B cell (primary cell): ENCODE measurements at regions of chr11 and their contacts with region 1.

Region 1: GRCh38 chr11:64185816-64186498 is at the start of gene STIP1:
- DNase-seq: peak; percentile 100
- ATAC-seq: peak; percentile 85
- H3K4me3 ChIP-seq: peak within 1 kb of the TSS; percentile 16 to 95 (median 83)
- H3K4me3 Mint-ChIP-seq: no peak within 1 kb of the TSS
- H3K27ac ChIP-seq: peak within 1 kb of the TSS; percentile 59 to 86
- H3K27ac Mint-ChIP-seq: peak within 1 kb of the TSS; percentile 94
- H3K4me1 ChIP-seq: peaks cover 13 to 24% of the 10 kb centered on the region in 2 donors
- H3K4me1 Mint-ChIP-seq: peaks cover 40% of the 10 kb centered on the region
- H3K27me3 ChIP-seq: no peaks in the 10 kb centered on the region
- H3K27me3 Mint-ChIP-seq: no peaks in the 10 kb centered on the region
- CTCF ChIP-seq: peak; percentile 37
- total RNA-seq, gene STIP1: 78.7 and 87.8 TPM in 2 replicates

Region 2: DNA sequence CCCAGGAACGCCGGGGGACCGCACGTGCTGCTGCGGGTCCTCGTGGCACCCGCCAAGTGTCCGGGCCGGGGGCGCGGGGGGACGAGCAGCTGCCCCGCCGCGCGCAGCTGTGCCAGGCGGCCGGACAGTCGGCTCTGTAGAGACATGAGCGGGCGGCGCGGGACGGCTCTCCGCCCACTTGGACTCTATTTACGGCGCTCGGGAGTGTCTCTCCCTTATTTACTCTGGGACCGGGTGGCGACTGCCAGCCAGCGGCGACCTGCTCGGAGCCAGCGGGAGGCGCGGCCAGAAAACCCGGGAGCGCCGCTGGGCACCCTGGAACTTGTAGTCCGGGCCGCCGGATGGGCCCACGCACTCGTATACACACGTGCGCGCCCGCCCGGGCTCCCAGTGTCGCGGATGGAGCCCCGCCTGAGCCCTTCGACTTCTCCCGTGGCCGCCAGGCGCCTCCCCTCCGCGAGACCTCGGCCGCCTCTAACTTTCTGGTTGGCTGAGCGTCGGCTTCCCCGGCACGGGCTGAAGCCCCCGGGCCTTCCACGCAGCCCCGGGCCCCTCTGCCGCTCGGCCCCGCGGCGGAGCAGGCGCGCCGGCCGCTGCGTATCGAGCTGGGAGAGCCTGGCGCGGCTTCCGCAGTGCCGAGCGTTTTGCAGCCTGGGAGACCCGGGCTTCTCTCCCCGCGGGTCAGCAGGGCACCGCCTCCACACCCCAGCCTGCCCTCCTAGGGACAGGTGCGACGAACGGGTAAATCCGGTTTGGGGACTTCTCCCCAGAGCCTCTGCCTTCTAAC is 19.9 kb before region 1 on chr11 and contains the start of gene MACROD1:
- CTCF ChIA-PET with region 1: no interaction called
- POLR2A ChIA-PET with region 1: interaction called, 3 read pairs
- intact Hi-C with region 1: loop called (anchors 2 kb)
- DNase-seq: peak; percentile 78
- ATAC-seq: peak; percentile 92
- H3K4me3 ChIP-seq: peak within 1 kb of the TSS in 4 of 5 experiments; percentile 67 to 87 (median 74)
- H3K4me3 Mint-ChIP-seq: peak within 1 kb of the TSS; percentile 91
- H3K27ac ChIP-seq: peak within 1 kb of the TSS in 1 of 2 donors; percentile 41
- H3K27ac Mint-ChIP-seq: peak within 1 kb of the TSS; percentile 82
- H3K4me1 ChIP-seq: peaks cover 12 to 14% of the 10 kb centered on the region in 2 donors
- H3K4me1 Mint-ChIP-seq: peaks cover 10% of the 10 kb centered on the region
- H3K27me3 ChIP-seq: no peaks in the 10 kb centered on the region
- H3K27me3 Mint-ChIP-seq: no peaks in the 10 kb centered on the region
- CTCF ChIP-seq: no peak
- total RNA-seq, gene MACROD1: 6.8 and 8.6 TPM in 2 replicates

Region 3: GRCh38 chr11:64240394-64241174 is 54.6 kb after region 1 on chr11 and contains the start of gene FKBP2:
- CTCF ChIA-PET with region 1: no interaction called
- POLR2A ChIA-PET with region 1: interaction called, 4 read pairs
- intact Hi-C with region 1: loop called (anchors 2 kb)
- DNase-seq: peak; percentile 99
- ATAC-seq: peak; percentile 58
- H3K4me3 ChIP-seq: peak within 1 kb of the TSS in 4 of 5 experiments; percentile 76 to 91 (median 83)
- H3K4me3 Mint-ChIP-seq: peak within 1 kb of the TSS; percentile 91
- H3K27ac ChIP-seq: peak within 1 kb of the TSS; percentile 98
- H3K27ac Mint-ChIP-seq: peak within 1 kb of the TSS; percentile 97
- H3K4me1 ChIP-seq: peaks cover 31 to 63% of the 10 kb centered on the region in 2 donors
- H3K4me1 Mint-ChIP-seq: peaks cover 62% of the 10 kb centered on the region
- H3K27me3 ChIP-seq: no peaks in the 10 kb centered on the region
- H3K27me3 Mint-ChIP-seq: no peaks in the 10 kb centered on the region
- CTCF ChIP-seq: no peak
- total RNA-seq, gene FKBP2: 23.7 and 25.7 TPM in 2 replicates

Region 4: DNA sequence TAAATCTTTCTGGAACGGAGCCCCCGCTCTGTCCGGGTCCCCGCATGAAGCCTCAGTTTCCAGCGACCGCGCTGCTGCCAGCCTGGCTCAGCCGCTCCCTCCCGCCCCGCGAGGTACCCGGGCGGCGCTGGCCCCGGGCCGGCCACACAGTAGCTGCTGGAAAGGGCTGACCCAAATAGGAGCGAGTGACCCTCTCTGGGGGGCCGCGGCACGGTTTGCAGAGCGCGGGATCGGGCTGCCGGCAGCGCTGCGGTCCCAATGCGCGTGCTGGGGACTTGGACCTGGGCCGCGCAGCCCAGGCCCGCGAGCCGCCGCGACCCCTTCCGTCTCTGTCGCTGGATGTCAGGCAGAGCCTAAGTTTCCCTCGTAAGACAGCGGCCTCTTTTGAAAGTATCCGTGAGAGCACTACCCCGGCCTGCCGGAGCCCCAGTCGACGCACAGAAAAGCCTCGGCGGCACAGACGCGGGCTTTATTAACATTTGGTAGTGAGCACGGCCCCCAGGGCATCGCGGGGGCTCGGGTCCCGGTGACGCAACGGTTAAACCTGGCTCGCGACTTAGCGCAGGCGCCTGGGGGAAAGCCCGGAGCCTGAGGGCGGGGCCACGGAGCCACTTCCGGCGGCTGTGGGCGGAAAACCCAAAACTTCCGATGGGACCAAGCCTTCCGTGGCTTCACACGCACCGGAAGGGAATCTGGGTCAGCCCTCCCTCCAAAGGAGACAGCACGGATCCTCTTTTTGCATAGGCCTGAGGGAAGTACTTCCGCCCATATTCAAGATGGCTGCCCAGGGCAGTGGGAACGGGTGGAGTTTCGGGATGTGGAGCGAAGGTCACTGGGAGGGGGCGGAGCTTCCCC is 83.7 kb after region 1 on chr11:
- CTCF ChIA-PET with region 1: no interaction called
- POLR2A ChIA-PET with region 1: interaction called, 10 read pairs
- intact Hi-C with region 1: loop called (anchors 1 kb)
- DNase-seq: peak; percentile 99
- ATAC-seq: peak; percentile 73
- H3K4me3 ChIP-seq: peak overlapping the region; percentile 79 to 96 (median 87)
- H3K4me3 Mint-ChIP-seq: peak overlapping the region; percentile 100
- H3K27ac ChIP-seq: peak overlapping the region; percentile 89 to 91
- H3K27ac Mint-ChIP-seq: peak overlapping the region; percentile 99
- H3K4me1 ChIP-seq: peaks cover 14 to 29% of the 10 kb centered on the region in 2 donors
- H3K4me1 Mint-ChIP-seq: peaks cover 19% of the 10 kb centered on the region
- H3K27me3 ChIP-seq: no peaks in the 10 kb centered on the region
- H3K27me3 Mint-ChIP-seq: no peaks in the 10 kb centered on the region
- CTCF ChIP-seq: peak; percentile 37

Region 5: DNA sequence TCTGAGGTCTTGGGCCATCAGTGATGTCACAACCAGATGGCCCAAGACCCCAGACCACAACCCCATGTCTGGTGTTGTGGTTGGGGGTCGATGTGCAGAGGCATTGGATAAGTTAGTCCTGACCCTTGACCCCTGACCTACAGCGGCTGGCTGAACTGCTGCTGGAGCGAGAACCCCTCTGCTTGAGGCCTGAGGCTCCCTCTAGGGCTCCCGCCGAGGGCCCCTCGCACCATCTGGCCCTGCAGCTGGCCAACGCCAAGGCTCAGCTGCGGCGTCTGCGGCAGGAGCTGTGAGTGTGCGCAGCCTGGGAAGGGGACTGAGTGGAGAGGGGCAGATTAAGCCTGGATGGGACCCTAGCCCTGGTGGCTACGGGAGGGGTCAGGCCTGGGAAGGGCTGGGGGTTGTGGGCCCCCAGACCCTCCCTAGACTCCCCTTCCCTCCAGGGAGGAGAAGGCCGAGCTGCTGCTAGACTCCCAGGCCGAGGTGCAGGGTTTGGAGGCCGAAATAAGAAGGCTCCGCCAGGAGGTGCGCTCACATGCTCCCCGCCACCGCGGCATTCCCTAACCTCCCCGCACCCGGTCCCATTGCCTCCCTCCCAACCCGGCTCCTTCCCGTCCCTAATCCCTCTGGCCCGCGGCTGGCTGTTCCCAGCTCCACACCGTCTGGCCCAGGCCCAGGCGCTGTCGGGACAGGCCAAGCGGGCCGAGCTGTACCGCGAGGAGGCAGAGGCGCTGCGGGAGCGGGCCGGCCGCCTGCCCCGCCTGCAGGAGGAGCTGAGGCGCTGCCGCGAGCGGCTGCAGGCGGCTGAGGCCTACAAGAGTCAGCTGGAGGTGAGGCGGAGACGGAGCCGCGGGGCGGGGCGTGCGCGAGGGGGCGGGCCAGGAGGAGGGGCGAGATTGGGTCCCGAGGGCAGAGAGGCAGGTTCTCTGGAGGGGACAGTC is 156.2 kb after region 1 on chr11:
- CTCF ChIA-PET with region 1: no interaction called
- POLR2A ChIA-PET with region 1: no interaction called
- intact Hi-C with region 1: loop called (anchors 1 kb)
- DNase-seq: peak; percentile 88
- ATAC-seq: peak; percentile 46
- H3K4me3 ChIP-seq: peak overlapping the region in 2 of 5 experiments; percentile 15 to 19
- H3K4me3 Mint-ChIP-seq: peak overlapping the region; percentile 89
- H3K27ac ChIP-seq: peak overlapping the region in 1 of 2 donors; percentile 12
- H3K27ac Mint-ChIP-seq: no peak overlapping the region
- H3K4me1 ChIP-seq: peaks cover 30 to 39% of the 10 kb centered on the region in 2 donors
- H3K4me1 Mint-ChIP-seq: peaks cover 50% of the 10 kb centered on the region
- H3K27me3 ChIP-seq: no peaks in the 10 kb centered on the region
- H3K27me3 Mint-ChIP-seq: no peaks in the 10 kb centered on the region
- CTCF ChIP-seq: peak; percentile 43